ENCODE measurements at regions of chr5 and their contacts with region 1.

Region 1: DNA sequence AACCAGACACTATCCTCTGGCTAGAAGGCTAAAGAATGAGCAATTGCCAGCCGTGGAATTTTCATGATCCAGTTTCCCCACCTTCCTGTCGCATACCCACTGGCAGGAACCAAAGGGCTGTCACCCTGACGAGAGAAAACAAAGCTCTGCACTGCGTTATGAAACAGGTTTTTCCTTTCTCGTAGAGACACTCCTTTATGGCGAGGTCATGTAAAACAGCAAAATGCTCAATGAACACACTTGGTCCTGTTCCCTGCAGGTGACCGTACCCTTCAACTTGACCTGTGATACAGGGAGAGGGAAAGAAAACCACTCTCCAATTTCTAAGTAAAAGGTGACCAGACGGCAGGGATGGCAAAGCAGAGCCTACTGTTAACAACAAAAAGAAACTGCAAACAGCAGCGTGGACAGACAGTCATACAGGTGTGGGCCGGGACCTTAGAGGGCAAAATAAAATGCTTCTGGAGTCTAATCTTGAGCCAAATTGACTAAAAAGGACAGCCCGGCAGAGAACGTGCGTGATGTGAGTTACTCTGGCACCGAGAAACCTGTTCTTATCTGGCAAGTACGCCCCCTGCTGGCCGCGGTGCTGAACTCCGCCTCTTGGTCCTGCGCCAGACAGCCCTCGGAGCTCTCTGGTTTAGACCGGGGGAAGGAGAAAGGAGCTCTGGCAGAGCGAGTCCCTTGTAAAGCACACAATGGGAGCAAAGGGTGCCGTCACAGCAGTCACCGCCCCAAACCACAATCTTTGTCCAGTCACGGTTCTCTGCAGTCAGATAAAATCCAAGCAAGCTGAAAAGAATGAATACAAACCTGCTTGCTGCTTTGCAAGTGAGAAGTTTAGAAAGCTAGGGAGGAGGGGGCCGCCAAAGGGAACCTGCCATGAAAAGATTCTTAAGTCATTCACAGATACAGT is 98.9 kb downstream of the EFNA5 start:
- DNase-seq: peak; percentile 92
- H3K4me3 Mint-ChIP-seq: peak overlapping the region; percentile 60
- H3K27ac Mint-ChIP-seq: no peak overlapping the region
- H3K4me1 Mint-ChIP-seq: peaks cover 14% of the 10 kb centered on the region
- H3K27me3 Mint-ChIP-seq: peaks cover 14% of the 10 kb centered on the region

Region 2: DNA sequence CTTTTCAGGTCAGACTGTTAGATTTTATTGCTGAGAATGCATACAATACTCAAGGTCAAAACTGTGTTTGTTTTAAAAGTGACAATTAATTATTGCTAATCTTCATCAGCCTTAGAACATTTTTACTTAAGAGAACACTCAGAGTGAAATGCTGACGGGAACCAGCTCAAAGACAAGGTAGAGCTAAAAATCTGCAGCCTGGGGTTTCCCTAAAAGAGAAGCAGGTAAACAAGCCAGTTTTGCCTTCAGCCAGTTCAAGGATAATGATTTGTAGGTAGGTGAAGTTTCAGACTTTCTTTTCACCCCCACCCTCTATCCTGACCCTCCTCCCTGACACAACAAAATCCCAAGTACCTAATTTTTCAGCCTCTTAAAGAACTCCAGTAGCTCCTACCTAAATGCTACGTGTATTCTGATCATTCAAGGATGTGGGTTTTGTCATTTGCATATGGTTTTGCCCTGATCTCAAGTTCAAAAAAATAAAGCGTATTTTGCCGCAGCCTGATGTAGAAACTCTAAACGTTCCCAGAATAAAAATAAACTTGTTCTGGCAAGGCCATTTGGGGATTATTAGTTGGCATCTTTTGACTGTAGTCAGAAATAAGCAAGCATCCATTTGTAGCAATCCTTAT is 308.4 kb before region 1 on chr5:
- CTCF ChIA-PET with region 1: no interaction called
- intact Hi-C with region 1: loop called (anchors 10 kb)
- DNase-seq: peak; percentile 6
- H3K4me3 Mint-ChIP-seq: no peak overlapping the region
- H3K27ac Mint-ChIP-seq: peak overlapping the region; percentile 7
- H3K4me1 Mint-ChIP-seq: peaks cover 6% of the 10 kb centered on the region
- H3K27me3 Mint-ChIP-seq: peaks cover 6% of the 10 kb centered on the region

Region 3: GRCh38 chr5:107456281-107456715 is 115.6 kb before region 1 on chr5:
- CTCF ChIA-PET with region 1: no interaction called
- intact Hi-C with region 1: loop called (anchors 5 kb)
- DNase-seq: no peak
- H3K4me3 Mint-ChIP-seq: no peak overlapping the region
- H3K27ac Mint-ChIP-seq: no peak overlapping the region
- H3K4me1 Mint-ChIP-seq: no peaks in the 10 kb centered on the region
- H3K27me3 Mint-ChIP-seq: peaks cover 12% of the 10 kb centered on the region

Region 4: GRCh38 chr5:107557051-107557658 is 14.7 kb before region 1 on chr5:
- CTCF ChIA-PET with region 1: interaction called, 12 read pairs
- intact Hi-C with region 1: no loop called
- DNase-seq: no peak
- H3K4me3 Mint-ChIP-seq: no peak overlapping the region
- H3K27ac Mint-ChIP-seq: no peak overlapping the region
- H3K4me1 Mint-ChIP-seq: no peaks in the 10 kb centered on the region
- H3K27me3 Mint-ChIP-seq: peaks cover 11% of the 10 kb centered on the region

Region 5: DNA sequence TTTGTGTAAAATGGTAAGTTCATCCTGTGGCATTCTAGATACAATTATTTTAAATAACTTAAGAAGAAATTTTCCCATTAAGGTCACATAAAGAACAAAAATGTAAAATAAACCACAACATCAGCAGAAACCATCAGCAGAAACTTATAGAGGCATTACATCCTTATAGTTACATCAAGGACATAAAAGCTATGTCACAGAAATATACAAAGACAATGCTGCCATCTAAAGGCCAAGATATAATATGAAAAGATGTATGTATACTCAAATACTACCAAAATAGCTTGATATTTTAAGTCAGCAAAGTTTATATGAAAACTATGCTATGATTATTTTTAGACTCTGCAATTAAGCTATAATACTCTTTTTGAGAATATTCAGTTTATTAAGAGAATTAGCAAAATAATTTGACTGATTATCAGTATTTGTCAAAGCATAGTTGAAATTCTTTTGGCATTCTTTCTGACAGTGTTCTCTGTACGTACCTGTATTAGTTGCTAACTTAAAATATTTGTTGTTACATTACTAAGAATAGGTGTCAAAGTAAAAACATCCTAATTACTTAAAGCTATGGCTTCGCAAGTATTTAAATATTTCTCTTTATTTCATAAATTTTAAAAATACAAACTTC is 773.8 kb after region 1 on chr5:
- CTCF ChIA-PET with region 1: interaction called, 3 read pairs
- intact Hi-C with region 1: loop called (anchors 10 kb)
- DNase-seq: no peak
- H3K4me3 Mint-ChIP-seq: no peak overlapping the region
- H3K27ac Mint-ChIP-seq: no peak overlapping the region
- H3K4me1 Mint-ChIP-seq: no peaks in the 10 kb centered on the region
- H3K27me3 Mint-ChIP-seq: no peaks in the 10 kb centered on the region